ENCODE measurements at regions of chr9 and their contacts with region 1.

Region 1: DNA sequence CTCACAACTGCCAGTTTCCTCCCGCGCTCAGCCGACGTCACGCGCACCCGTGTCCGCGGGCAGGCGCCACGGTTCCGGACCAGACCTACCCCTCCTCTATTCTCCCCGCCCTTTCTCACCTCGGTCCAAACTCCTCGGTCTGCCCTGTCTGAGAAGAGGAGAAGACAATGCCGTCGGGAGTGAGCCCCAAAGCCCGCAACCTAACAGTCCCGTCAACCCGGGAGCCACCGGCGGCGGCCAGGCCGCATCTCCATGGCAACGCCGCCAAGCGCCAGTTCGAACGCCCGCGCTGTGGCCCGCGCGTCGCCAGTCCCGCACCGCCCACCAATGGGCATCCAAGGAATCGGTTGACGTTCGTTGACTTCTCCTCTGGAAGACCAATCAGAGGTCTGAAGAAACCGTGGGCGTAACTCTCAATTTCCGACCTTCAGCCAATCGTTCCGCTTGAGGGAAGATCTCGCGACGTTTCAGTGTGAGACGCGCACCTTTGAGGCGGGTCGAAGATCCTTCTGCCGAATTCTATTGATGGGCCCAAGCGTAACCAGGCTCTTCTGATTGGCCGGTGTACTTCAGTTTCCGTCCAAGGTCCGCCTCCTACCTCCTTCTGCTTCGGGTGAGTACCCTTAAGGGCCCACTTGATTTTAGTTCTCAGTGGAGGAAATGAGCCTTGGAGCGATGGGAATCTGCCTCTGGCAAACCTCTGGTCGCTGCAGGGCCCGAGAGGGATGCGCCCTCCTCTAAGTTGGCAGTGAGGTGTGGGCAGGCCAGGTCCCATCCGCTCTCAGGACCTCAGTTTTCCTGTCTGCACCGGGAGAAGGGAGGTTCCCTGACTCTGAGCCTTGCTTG is at the starts of genes KIF24 and NUDT2:
- DNase-seq: peak; percentile 99 to 100 (median 100)
- H3K4me3 ChIP-seq: peak within 1 kb of the TSS; percentile 86 to 99 (median 98)
- H3K4me3 Mint-ChIP-seq: peak within 1 kb of the TSS; percentile 95 to 99
- H3K27ac ChIP-seq: peak within 1 kb of the TSS; percentile 91 to 95
- H3K27ac Mint-ChIP-seq: peak within 1 kb of the TSS; percentile 94 to 99 (median 97)
- H3K4me1 ChIP-seq: peaks cover 30 to 44% of the 10 kb centered on the region in 2 donors
- H3K4me1 Mint-ChIP-seq: peaks cover 40% of the 10 kb centered on the region
- H3K27me3 ChIP-seq: no peaks in the 10 kb centered on the region
- H3K27me3 Mint-ChIP-seq: peaks cover 0 to 2% (median 2%) of the 10 kb centered on the region in 3 donors
- CTCF ChIP-seq: no peak
- polyA plus RNA-seq, gene KIF24: 0.13 to 0.31 TPM in 2 of 3 donors, not detected in the other
- polyA plus RNA-seq, gene NUDT2: 24.4 to 56.9 (median 38.0) TPM

Region 2: GRCh38 chr9:34178520-34179212 is 150.5 kb before region 1 on chr9 and contains the start of gene UBAP1:
- intact Hi-C with region 1: loop called in 1 of 2 experiments (anchors 10 kb)
- DNase-seq: peak; percentile 96 to 99 (median 98)
- H3K4me3 ChIP-seq: peak within 1 kb of the TSS; percentile 98 to 100 (median 99)
- H3K4me3 Mint-ChIP-seq: peak within 1 kb of the TSS; percentile 96 to 97
- H3K27ac ChIP-seq: peak within 1 kb of the TSS; percentile 95 to 97
- H3K27ac Mint-ChIP-seq: peak within 1 kb of the TSS; percentile 98 to 100 (median 99)
- H3K4me1 ChIP-seq: peaks cover 21 to 23% of the 10 kb centered on the region in 2 donors
- H3K4me1 Mint-ChIP-seq: peaks cover 9% of the 10 kb centered on the region
- H3K27me3 ChIP-seq: no peaks in the 10 kb centered on the region
- H3K27me3 Mint-ChIP-seq: peaks cover 0 to 10% (median 0%) of the 10 kb centered on the region in 3 donors
- CTCF ChIP-seq: no peak
- polyA plus RNA-seq, gene UBAP1: 32.5 to 44.5 (median 39.2) TPM

Region 3: GRCh38 chr9:34292552-34292951 is 36.7 kb before region 1 on chr9:
- intact Hi-C with region 1: no loop called
- DNase-seq: no peak
- H3K4me3 ChIP-seq: no peak overlapping the region
- H3K4me3 Mint-ChIP-seq: no peak overlapping the region
- H3K27ac ChIP-seq: no peak overlapping the region
- H3K27ac Mint-ChIP-seq: no peak overlapping the region
- H3K4me1 ChIP-seq: peaks cover 12 to 24% of the 10 kb centered on the region in 2 donors
- H3K4me1 Mint-ChIP-seq: peaks cover 5% of the 10 kb centered on the region
- H3K27me3 ChIP-seq: no peaks in the 10 kb centered on the region
- H3K27me3 Mint-ChIP-seq: no peaks in the 10 kb centered on the region
- CTCF ChIP-seq: no peak

Region 4: GRCh38 chr9:34376596-34377403 is 47.6 kb after region 1 on chr9 and contains the start of gene MYORG:
- intact Hi-C with region 1: loop called (anchors 2 to 5 kb)
- DNase-seq: peak; percentile 59 to 71 (median 67)
- H3K4me3 ChIP-seq: peak within 1 kb of the TSS; percentile 56 to 90 (median 74)
- H3K4me3 Mint-ChIP-seq: peak within 1 kb of the TSS; percentile 89 to 94
- H3K27ac ChIP-seq: no peak within 1 kb of the TSS
- H3K27ac Mint-ChIP-seq: peak within 1 kb of the TSS in 6 of 7 donors; percentile 54 to 80 (median 71)
- H3K4me1 ChIP-seq: peaks cover 35 to 45% of the 10 kb centered on the region in 2 donors
- H3K4me1 Mint-ChIP-seq: peaks cover 39% of the 10 kb centered on the region
- H3K27me3 ChIP-seq: peaks cover 0 to 22% of the 10 kb centered on the region in 2 donors
- H3K27me3 Mint-ChIP-seq: peaks cover 27 to 46% (median 30%) of the 10 kb centered on the region in 3 donors
- CTCF ChIP-seq: no peak
- polyA plus RNA-seq, gene MYORG: 0.01 to 0.05 TPM in 2 of 3 donors, not detected in the other

Region 5: GRCh38 chr9:34513567-34514214 is 184.5 kb after region 1 on chr9:
- intact Hi-C with region 1: no loop called
- DNase-seq: no peak
- H3K4me3 ChIP-seq: no peak overlapping the region
- H3K4me3 Mint-ChIP-seq: no peak overlapping the region
- H3K27ac ChIP-seq: no peak overlapping the region
- H3K27ac Mint-ChIP-seq: no peak overlapping the region
- H3K4me1 ChIP-seq: peaks cover 13 to 15% of the 10 kb centered on the region in 2 donors
- H3K4me1 Mint-ChIP-seq: peaks cover 14% of the 10 kb centered on the region
- H3K27me3 ChIP-seq: no peaks in the 10 kb centered on the region
- H3K27me3 Mint-ChIP-seq: peaks cover 2 to 14% (median 7%) of the 10 kb centered on the region in 3 donors
- CTCF ChIP-seq: no peak

Region 6: DNA sequence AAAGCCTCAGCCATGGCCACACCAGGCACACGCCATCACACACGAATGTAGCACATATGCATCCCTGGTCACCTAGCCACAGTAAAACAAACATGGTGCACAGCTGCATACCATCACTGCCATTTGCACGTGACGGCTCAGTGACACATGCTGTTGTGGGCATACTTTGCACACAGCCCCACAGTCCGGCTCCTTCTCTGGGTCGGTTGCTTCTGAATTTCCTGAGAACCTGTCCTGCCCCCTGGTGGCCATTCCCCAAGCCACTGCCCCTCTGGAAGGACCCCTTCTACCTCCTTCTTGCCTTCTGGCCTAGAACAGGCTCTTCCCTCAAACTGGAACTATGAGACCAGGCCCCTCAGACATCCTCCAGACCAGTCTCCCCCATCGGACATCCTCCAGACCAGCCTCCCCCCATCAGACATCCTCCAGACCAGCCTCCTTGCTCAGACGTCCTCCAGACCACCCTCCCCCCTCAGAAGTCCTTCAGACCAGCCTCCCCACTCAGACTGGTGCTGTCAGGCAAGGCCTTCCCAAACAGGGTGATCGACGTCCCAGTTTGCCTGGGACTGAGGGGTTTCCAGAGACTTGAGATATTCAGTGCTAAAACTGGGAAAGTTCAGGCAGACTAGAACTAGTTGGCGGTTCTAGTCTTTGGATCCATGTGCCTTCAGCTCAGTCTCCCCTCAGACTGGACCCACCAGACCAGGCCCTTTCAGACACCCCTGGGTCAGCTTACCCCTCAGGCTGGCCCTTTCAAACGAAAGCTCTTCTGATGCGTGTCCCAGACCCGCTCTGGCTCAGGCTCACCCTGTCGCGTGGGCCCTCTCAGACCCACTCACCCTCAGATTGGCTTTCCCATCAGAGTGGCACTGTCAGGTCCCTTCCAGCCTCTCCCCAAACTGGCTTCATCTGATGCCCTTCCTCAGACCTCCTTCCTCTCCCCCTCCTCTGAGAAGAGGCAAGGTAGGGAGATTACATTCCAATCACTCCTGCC is 217.9 kb after region 1 on chr9:
- intact Hi-C with region 1: no loop called
- DNase-seq: peak; percentile 12 to 40 (median 18)
- H3K4me3 ChIP-seq: no peak overlapping the region
- H3K4me3 Mint-ChIP-seq: no peak overlapping the region
- H3K27ac ChIP-seq: no peak overlapping the region
- H3K27ac Mint-ChIP-seq: no peak overlapping the region
- H3K4me1 ChIP-seq: no peaks in the 10 kb centered on the region
- H3K4me1 Mint-ChIP-seq: no peaks in the 10 kb centered on the region
- H3K27me3 ChIP-seq: no peaks in the 10 kb centered on the region
- H3K27me3 Mint-ChIP-seq: peaks cover 3 to 18% (median 13%) of the 10 kb centered on the region in 3 donors
- CTCF ChIP-seq: peak; percentile 53

Measured in CD14-positive monocyte (primary cell).